ENCODE measurements at regions of chr6 and their contacts with region 1.

Region 1: DNA sequence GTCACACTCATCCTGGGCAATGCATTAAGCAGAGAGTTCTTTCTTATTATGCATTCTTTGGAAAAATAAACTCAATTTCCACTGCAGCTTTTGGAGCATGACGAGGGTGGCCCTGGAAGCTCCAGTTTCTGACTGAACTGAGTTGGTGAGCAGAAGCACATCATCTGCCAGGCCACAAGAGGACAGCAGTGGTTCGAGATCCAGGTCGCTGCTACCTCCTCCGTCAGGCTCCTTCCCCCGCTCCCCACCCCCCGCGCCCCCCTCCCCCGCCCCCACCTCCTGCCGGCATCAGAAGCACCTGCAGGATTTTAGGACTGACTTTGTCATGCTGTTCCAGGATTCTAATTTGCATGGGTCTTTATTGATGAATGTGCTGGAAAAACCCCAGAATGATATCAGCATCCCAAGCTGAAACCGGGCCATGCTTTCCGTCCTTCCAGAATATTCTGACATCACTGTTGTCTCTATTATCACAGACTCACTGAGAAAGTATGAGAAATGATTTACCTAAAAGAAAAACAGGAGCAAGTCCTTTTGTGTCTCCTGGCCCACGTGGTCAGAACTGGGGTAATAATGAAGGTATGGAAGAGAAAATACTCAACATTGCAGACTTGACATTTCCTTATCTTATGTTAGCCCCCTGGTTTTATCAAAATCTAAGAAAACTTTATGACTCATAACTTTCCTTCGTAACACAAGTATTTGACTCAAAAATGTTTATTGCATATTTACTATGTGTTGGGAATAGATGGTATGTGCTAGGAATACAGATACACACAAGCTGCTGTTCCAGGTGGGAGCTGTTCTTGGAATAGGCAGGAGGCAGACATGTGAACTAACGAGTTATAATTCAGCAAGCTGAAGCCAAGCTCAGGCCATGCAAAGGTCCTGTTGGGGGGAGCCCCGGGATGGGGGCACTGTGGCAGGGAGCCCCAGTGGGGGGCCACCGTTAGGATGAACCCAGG is 220.2 kb upstream of the EXOC2 start:
- DNase-seq: peak; percentile 71 to 79
- H3K4me3 ChIP-seq: no peak overlapping the region
- H3K4me3 Mint-ChIP-seq: no peak overlapping the region
- H3K27ac Mint-ChIP-seq: no peak overlapping the region
- H3K4me1 ChIP-seq: peaks cover 12% of the 10 kb centered on the region
- H3K4me1 Mint-ChIP-seq: no peaks in the 10 kb centered on the region
- H3K27me3 ChIP-seq: no peaks in the 10 kb centered on the region
- H3K27me3 Mint-ChIP-seq: no peaks in the 10 kb centered on the region
- CTCF ChIP-seq: peak; percentile 80 to 91

Region 2: DNA sequence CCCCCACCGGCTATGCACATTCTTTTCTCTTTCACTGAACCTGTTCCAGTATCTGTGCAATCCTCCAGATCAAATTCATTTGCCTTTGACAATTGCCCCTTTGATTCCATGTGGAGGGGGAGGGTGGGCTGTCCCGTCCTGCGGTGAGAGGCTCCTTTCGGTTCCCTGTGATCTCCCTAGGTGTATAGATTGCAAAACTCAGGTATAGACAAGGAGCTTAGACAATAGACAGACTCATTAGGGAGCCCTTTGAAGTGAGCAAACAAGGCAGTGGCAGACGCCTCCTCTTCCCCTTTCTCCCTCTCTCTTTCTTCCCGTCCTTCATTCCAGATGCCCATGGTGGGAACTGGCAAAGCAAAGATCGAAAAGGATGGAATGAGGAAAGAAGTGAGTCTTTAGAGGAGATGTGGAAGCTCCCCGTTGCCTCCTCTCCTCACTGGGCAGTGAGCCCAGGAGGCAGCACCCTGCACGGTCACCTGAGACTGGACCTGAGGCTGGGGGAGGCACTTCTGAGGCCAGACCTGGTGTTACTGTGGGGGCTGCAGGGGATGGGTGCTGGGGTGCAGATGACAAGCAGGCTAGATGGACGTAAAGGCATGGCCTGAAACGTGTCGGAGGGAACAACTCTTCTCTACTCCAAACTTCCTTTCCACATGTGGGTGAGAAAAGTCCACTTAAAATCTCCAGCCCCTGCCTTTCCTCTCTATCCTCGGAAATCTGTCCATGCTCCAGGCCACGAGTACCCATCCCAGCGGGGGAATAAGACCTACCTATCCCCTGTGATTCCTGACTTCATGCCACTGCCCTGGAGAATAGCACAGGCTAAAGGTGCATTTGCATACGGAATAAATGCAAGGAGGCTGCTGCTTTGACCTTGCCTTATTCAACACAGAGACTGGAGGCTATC is 142.1 kb after region 1 on chr6:
- CTCF ChIA-PET with region 1: no interaction called
- POLR2A ChIA-PET with region 1: no interaction called
- intact Hi-C with region 1: loop called (anchors 2 kb)
- DNase-seq: peak; percentile 93
- H3K4me3 ChIP-seq: no peak overlapping the region
- H3K4me3 Mint-ChIP-seq: no peak overlapping the region
- H3K27ac Mint-ChIP-seq: no peak overlapping the region
- H3K4me1 ChIP-seq: peaks cover 52% of the 10 kb centered on the region
- H3K4me1 Mint-ChIP-seq: peaks cover 18% of the 10 kb centered on the region
- H3K27me3 ChIP-seq: no peaks in the 10 kb centered on the region
- H3K27me3 Mint-ChIP-seq: no peaks in the 10 kb centered on the region
- CTCF ChIP-seq: no peak

Region 3: DNA sequence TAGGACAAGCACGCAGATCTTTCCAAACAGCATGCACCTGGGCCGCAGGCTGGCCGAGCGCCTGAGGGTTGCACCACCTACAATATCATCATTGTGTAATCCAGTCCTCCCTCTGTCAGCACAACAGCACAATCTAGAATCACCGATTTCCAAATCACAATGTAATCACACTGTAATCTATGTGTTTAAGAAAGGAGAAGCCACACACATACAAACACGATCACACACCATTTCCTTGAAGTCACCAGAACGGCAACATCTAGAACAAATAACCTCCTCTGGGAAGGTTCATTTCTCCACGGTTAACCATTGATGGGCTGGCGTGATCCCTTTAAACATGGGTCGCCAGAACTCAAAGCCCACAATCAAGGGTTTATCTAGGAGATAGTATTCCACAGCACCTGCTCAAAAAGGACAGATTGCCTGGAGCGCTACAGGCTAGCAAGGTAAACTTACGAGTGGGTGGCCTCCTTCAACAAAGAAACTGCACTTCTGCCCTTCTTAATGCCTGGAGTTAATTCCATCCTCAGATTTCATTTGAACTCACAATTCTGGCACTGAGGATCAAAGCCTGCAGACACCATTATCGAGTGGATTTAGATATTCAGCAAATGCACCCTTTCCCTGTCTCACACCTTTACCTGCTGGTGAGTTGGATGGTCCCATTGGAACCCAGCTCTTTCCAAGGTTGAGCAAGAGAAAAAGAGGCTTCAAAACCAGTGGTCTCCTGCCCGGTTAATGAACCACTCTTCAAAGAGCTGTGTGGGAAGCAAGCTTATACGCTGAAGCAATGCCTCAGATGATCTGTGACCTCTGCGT is 315.0 kb after region 1 on chr6:
- CTCF ChIA-PET with region 1: interaction called, 3 read pairs
- POLR2A ChIA-PET with region 1: interaction called, 3 read pairs
- intact Hi-C with region 1: loop called (anchors 1 kb)
- DNase-seq: peak; percentile 91 to 94
- H3K4me3 ChIP-seq: peak overlapping the region; percentile 0; the same call in 1 of the 2 replicates
- H3K4me3 Mint-ChIP-seq: peak overlapping the region; percentile 52
- H3K27ac Mint-ChIP-seq: peak overlapping the region; percentile 67
- H3K4me1 ChIP-seq: peaks cover 57% of the 10 kb centered on the region
- H3K4me1 Mint-ChIP-seq: peaks cover 63% of the 10 kb centered on the region
- H3K27me3 ChIP-seq: no peaks in the 10 kb centered on the region
- H3K27me3 Mint-ChIP-seq: no peaks in the 10 kb centered on the region
- CTCF ChIP-seq: no peak

Region 4: DNA sequence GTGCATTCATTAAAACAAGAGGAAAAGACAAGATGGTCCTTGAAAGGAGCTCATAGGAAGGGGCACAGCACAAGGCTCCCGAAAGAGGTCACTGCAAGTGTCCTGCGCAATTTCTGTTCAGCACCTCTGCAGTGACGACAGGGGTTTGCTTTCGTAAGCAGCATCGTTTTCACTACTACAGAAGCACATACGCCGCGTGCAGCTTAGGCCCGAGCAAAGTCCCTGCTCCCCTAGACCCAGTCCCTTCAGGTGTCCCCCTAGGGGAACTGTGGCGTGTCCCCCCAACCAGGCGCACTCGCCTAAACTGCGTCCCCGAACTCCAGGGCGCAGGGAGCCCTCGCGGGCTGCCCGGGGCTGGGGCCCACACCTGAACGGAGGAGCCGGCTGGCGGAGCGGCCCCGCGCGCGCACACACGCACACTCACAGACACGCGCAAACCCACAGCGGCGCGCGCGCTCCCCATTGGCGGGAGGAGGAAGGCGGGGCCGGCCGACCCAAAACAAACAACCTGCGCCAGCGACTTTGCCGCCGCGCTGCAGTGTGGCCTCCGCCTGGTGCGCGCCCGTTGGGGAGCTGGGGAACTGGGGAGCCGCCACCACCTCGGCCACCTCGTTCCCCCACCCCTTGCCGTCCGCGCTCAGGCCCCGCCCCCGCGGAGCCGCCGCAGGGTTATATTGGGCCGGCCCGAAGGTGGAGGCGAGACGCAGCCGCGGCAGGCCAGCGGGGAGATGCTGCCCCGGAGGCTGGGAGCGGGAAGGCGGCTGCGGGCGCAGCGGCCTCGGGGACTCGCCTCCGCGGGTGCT is 398.4 kb after region 1 on chr6 and contains the start of gene FOXQ1:
- CTCF ChIA-PET with region 1: interaction called, 9 read pairs
- POLR2A ChIA-PET with region 1: interaction called, 16 read pairs
- intact Hi-C with region 1: loop called (anchors 2 kb)
- DNase-seq: peak; percentile 96 to 98
- H3K4me3 ChIP-seq: peak within 1 kb of the TSS; percentile 94
- H3K4me3 Mint-ChIP-seq: peak within 1 kb of the TSS; percentile 78
- H3K27ac Mint-ChIP-seq: peak within 1 kb of the TSS; percentile 89
- H3K4me1 ChIP-seq: peaks cover 26% of the 10 kb centered on the region
- H3K4me1 Mint-ChIP-seq: peaks cover 39% of the 10 kb centered on the region
- H3K27me3 ChIP-seq: no peaks in the 10 kb centered on the region
- H3K27me3 Mint-ChIP-seq: peaks cover 2% of the 10 kb centered on the region
- CTCF ChIP-seq: peak in 1 of 2 experiments; percentile 16
- total RNA-seq, gene FOXQ1: 170 and 191 TPM in 2 replicates

Region 5: GRCh38 chr6:1381481-1382330 is 468.6 kb after region 1 on chr6:
- CTCF ChIA-PET with region 1: interaction called, 7 read pairs
- POLR2A ChIA-PET with region 1: no interaction called
- intact Hi-C with region 1: loop called (anchors 5 kb)
- DNase-seq: peak in 1 of 2 experiments; percentile 88
- H3K4me3 ChIP-seq: peak overlapping the region; percentile 32
- H3K4me3 Mint-ChIP-seq: peak overlapping the region; percentile 21
- H3K27ac Mint-ChIP-seq: no peak overlapping the region
- H3K4me1 ChIP-seq: peaks cover 17% of the 10 kb centered on the region
- H3K4me1 Mint-ChIP-seq: no peaks in the 10 kb centered on the region
- H3K27me3 ChIP-seq: peaks cover 5% of the 10 kb centered on the region
- H3K27me3 Mint-ChIP-seq: peaks cover 28% of the 10 kb centered on the region
- CTCF ChIP-seq: peak; percentile 72 to 90

Measured in Caco-2 (cell line).